T-cell (primary cell): ENCODE measurements at regions of chr11 and their contacts with region 1.

Region 1: GRCh38 chr11:121464352-121464946 is 11.7 kb upstream of the SORL1-AS1 start:
- DNase-seq: peak; percentile 42 to 85 (median 59)
- ATAC-seq: peak; percentile 55 to 74 (median 72)
- H3K4me3 ChIP-seq: peak overlapping the region; percentile 16 to 19
- H3K4me3 Mint-ChIP-seq: peak overlapping the region; percentile 69 to 98 (median 74)
- H3K27ac ChIP-seq: peak overlapping the region; percentile 61
- H3K27ac Mint-ChIP-seq: peak overlapping the region; percentile 91 to 95
- H3K4me1 ChIP-seq: peaks cover 83 to 96% of the 10 kb centered on the region in 2 experiments
- H3K4me1 Mint-ChIP-seq: peaks cover 99 to 100% (median 100%) of the 10 kb centered on the region in 3 donors
- H3K27me3 ChIP-seq: no peaks in the 10 kb centered on the region
- H3K27me3 Mint-ChIP-seq: no peaks in the 10 kb centered on the region

Region 2: GRCh38 chr11:121482231-121483129 is 18.0 kb after region 1 on chr11:
- CTCF ChIA-PET with region 1: interaction called, 3 to 24 read pairs
- POLR2A ChIA-PET with region 1: interaction called, 4 to 9 read pairs
- DNase-seq: peak in 34 of 35 experiments; percentile 37 to 83 (median 60)
- ATAC-seq: peak; percentile 83 to 88 (median 87)
- H3K4me3 ChIP-seq: peak overlapping the region; percentile 25 to 48
- H3K4me3 Mint-ChIP-seq: peak overlapping the region; percentile 69 to 88 (median 78)
- H3K27ac ChIP-seq: peak overlapping the region; percentile 82
- H3K27ac Mint-ChIP-seq: peak overlapping the region; percentile 87 to 92
- H3K4me1 ChIP-seq: peaks cover 24 to 76% of the 10 kb centered on the region in 2 experiments
- H3K4me1 Mint-ChIP-seq: peaks cover 59 to 80% (median 74%) of the 10 kb centered on the region in 3 donors
- H3K27me3 ChIP-seq: no peaks in the 10 kb centered on the region
- H3K27me3 Mint-ChIP-seq: no peaks in the 10 kb centered on the region